ENCODE measurements at regions of chr2 and their contacts with region 1.

Region 1: DNA sequence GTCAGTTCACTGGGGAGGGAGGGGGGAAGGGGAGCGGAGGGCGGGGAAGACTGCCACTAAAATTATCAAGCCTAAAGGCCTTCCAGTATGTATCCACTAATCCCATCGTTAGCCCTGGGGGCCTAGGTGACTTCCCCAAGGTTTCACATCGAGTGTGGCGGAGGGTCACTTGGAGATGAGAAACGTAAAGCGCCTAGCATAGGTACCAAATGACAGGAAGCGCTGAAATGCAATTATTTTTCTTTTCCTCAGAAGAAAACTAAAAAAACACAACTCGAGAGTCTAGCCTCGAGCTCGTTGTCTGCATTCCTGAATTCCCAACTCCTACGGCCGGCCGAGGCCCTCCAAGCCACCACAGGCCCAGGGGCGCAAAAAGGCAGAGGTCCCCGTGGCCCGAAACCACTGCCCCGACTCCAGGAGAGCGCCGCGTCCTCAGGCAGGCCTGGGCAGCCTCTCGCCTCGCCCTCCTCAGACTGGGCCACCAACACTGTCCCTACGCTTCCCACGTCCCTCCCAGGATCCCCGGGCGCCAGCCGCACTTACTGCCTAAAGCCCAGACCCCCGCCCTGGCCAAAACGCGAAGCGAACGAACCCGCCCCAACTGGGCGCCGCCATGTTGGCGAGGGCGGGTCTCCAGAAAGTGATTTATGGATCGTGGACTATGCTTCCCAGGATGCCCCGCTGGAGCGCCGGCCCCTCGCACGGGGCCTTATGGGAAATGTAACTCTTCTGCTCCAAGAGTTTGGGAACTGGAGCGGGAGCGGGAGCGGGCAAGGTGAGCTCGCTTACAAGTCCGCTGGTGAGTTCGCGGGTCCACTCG is at the start of gene USP40:
- DNase-seq: peak; percentile 89 to 93
- H3K4me3 ChIP-seq: peak within 1 kb of the TSS; percentile 91
- H3K27ac ChIP-seq: peak within 1 kb of the TSS; percentile 88
- H3K4me1 ChIP-seq: peaks cover 18% of the 10 kb centered on the region
- H3K27me3 ChIP-seq: no peaks in the 10 kb centered on the region
- CTCF ChIP-seq: no peak
- total RNA-seq, gene USP40: 116 and 127 TPM in 2 replicates

Region 2: GRCh38 chr2:232761301-232761907 is 804.9 kb before region 1 on chr2:
- CTCF ChIA-PET with region 1: interaction called, 15 read pairs
- POLR2A ChIA-PET with region 1: no interaction called
- intact Hi-C with region 1: no loop called
- DNase-seq: peak; percentile 47 to 71
- H3K4me3 ChIP-seq: no peak overlapping the region
- H3K27ac ChIP-seq: no peak overlapping the region
- H3K4me1 ChIP-seq: no peaks in the 10 kb centered on the region
- H3K27me3 ChIP-seq: no peaks in the 10 kb centered on the region
- CTCF ChIP-seq: peak; percentile 85

Region 3: DNA sequence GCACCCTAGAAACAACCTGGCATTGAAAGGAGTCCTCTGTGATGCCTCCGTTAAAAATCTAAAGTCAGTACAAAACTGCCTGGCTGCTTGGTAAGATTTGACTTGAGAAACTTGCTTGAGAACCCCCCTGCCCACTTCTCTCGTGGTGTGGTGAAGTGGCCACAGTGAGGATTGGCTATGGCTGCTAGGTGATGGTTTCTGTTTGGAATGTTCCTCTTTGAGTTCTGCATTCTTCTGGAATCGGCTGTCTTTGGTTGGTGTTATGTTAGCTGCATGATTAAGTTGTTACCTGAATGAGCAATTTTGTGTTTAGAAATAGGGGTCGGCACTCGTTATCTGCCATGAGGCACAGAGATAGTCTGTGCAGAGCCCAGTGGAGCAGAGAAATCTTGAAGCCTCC is 280.4 kb before region 1 on chr2:
- CTCF ChIA-PET with region 1: no interaction called
- POLR2A ChIA-PET with region 1: interaction called, 37 read pairs
- intact Hi-C with region 1: no loop called
- DNase-seq: no peak
- H3K4me3 ChIP-seq: no peak overlapping the region
- H3K27ac ChIP-seq: no peak overlapping the region
- H3K4me1 ChIP-seq: peaks cover 1% of the 10 kb centered on the region; the same call in 1 of the 2 replicates
- H3K27me3 ChIP-seq: no peaks in the 10 kb centered on the region
- CTCF ChIP-seq: no peak

Region 4: DNA sequence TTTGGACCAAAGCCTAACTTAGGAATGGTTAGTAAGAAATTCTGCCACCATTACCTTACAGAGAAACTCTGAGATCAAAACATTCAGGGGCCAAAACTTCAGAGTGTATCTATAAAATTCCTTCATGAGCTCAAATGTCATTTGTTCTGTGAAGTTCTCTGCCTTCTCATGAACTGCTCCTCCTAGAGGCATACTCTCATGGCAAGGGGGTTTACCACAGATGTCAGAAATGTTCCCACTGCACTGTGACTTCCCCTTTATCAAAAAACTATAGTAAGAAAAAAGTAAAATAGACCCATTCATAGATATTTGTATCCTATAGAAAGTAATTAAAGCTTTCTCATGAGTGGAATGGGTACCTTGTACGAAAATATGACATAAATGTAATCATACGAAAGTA is 68.2 kb before region 1 on chr2:
- CTCF ChIA-PET with region 1: no interaction called
- POLR2A ChIA-PET with region 1: interaction called, 14 read pairs
- intact Hi-C with region 1: no loop called
- DNase-seq: no peak
- H3K4me3 ChIP-seq: no peak overlapping the region
- H3K27ac ChIP-seq: no peak overlapping the region
- H3K4me1 ChIP-seq: peaks cover 13% of the 10 kb centered on the region
- H3K27me3 ChIP-seq: no peaks in the 10 kb centered on the region
- CTCF ChIP-seq: no peak

Region 5: DNA sequence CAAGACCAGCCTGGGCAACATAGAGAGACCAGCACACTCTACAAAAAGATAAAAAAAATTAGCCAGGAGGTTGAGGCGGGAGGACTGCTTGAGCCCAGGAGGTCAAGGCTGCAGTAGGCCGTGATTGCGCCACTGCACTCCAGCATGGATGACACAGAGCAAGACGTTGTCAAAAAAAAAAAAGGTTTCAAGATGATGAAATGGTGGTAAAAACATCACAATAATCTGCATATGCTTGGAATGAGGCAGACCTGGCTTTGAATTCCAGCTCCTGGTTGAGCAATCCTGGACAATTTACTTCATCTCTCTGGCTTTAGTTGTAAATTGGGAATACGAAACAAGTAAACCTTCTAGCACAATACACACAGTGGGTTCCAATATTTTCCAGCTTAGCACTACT is 23.8 kb before region 1 on chr2:
- CTCF ChIA-PET with region 1: no interaction called
- POLR2A ChIA-PET with region 1: no interaction called
- intact Hi-C with region 1: no loop called
- DNase-seq: peak in 1 of 2 experiments; percentile 65
- H3K4me3 ChIP-seq: no peak overlapping the region
- H3K27ac ChIP-seq: no peak overlapping the region
- H3K4me1 ChIP-seq: 0 out of 2 replicates have a peak, but pooled peaks cover 3% of the 10 kb centered on the region
- H3K27me3 ChIP-seq: no peaks in the 10 kb centered on the region
- CTCF ChIP-seq: no peak

Region 6: GRCh38 chr2:234550511-234551107 is 984.3 kb after region 1 on chr2:
- CTCF ChIA-PET with region 1: no interaction called
- POLR2A ChIA-PET with region 1: no interaction called
- intact Hi-C with region 1: no loop called
- DNase-seq: peak; percentile 74 to 85
- H3K4me3 ChIP-seq: no peak overlapping the region
- H3K27ac ChIP-seq: no peak overlapping the region
- H3K4me1 ChIP-seq: peaks cover 11% of the 10 kb centered on the region
- H3K27me3 ChIP-seq: no peaks in the 10 kb centered on the region
- CTCF ChIP-seq: peak; percentile 99